Heart left ventricle (tissue), 16 donors: ENCODE measurements at regions of chr18 and their contacts with region 1.

Region 1: DNA sequence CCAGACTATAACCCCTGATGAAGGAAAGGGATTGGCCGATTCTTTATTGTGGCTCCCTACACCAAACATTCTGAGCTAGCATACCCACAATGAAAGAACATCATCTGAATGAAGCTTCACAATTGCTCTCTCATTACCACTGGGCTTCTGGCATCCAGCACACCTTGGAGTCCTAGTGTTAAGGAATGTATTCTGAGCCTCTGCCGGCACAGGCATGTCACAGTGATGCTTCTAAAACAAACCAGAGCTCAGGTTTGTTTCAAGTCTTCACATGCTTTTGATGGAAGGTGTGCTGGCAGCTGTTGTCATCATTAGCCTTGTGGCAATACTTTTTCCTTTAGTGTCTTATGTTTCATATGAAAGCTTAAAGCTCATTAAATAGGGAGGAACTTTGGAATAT is 76.3 kb upstream of the RBBP8 start:
- DNase-seq: no peak
- ATAC-seq: no peak
- H3K4me3 ChIP-seq: no peak overlapping the region
- H3K27ac ChIP-seq: no peak overlapping the region
- H3K4me1 ChIP-seq: no peaks in the 10 kb centered on the region
- H3K27me3 ChIP-seq: peaks cover 0 to 30% (median 2%) of the 10 kb centered on the region in 9 donors
- CTCF ChIP-seq: no peak
- POLR2A ChIP-seq: no peak

Region 2: GRCh38 chr18:22831441-22831904 is 25.4 kb before region 1 on chr18:
- intact Hi-C with region 1: no loop called
- DNase-seq: no peak
- ATAC-seq: no peak
- H3K4me3 ChIP-seq: no peak overlapping the region
- H3K27ac ChIP-seq: no peak overlapping the region
- H3K4me1 ChIP-seq: no peaks in the 10 kb centered on the region
- H3K27me3 ChIP-seq: peaks cover 0 to 4% (median 0%) of the 10 kb centered on the region in 9 donors
- CTCF ChIP-seq: no peak
- POLR2A ChIP-seq: no peak

Region 3: DNA sequence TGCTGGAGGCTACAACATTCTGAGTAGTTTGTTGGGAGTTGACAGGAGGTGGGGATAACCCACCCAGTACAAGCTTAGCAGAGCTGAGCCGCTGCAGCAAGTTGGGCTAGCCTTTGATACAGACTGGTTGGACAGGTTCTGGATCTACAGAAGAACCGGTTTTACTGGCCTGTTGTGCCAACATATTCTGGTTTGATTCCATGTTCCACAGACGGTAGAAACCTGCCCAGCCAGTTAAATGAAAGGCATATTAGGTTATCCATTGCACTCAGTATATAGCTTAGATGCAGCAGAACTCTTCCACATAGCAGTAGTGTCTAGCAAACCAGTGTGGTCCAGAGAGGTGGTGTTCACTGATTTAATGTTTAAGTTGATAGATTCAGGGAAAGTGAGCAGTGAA is 57.0 kb after region 1 on chr18:
- intact Hi-C with region 1: loop called in 1 of 10 experiments (anchors 10 kb)
- DNase-seq: no peak
- ATAC-seq: peak in 1 of 4 donors; percentile 27
- H3K4me3 ChIP-seq: no peak overlapping the region
- H3K27ac ChIP-seq: no peak overlapping the region
- H3K4me1 ChIP-seq: no peaks in the 10 kb centered on the region
- H3K27me3 ChIP-seq: no peaks in the 10 kb centered on the region
- CTCF ChIP-seq: no peak
- POLR2A ChIP-seq: no peak

Region 4: DNA sequence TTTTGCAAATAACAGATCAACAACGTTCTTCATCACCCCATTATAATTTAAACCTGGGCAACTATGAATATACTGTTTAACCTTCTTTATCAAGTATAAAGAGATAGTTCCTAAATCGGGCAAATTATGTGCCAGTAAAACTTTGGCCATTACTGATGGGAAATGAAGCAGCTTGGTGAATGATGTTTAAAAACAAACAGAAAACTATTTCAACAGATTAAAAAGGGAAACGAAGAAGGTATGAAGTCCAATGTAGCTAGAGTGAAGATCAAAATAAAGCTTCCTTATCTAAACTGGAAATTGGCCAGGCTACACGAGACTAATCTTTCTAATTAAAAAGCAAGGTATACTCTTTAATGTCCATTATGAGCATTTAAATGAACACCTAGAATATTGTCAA is 69.6 kb after region 1 on chr18:
- intact Hi-C with region 1: no loop called
- DNase-seq: no peak
- ATAC-seq: no peak
- H3K4me3 ChIP-seq: no peak overlapping the region
- H3K27ac ChIP-seq: no peak overlapping the region
- H3K4me1 ChIP-seq: no peaks in the 10 kb centered on the region
- H3K27me3 ChIP-seq: no peaks in the 10 kb centered on the region
- CTCF ChIP-seq: no peak
- POLR2A ChIP-seq: no peak

Region 5: DNA sequence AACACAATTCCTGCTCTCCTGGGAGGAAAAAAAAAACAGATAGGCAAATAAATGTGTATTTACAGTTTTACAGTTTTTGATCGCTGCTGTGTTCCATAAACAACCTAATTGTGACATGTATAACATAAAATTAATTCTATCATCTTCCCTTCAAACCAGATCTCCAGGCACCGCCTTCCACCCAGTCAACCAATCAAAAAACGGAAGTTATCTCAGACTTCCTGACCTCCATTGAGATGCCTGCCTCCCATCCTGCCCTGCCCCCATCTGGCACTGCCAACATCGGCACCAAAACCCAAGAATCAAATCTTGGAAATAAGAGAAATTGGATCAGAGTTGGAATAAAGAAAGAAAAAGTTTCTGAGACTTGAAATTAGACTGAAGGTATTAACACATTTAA is 593.2 kb after region 1 on chr18:
- intact Hi-C with region 1: no loop called
- DNase-seq: no peak
- ATAC-seq: no peak
- H3K4me3 ChIP-seq: no peak overlapping the region
- H3K27ac ChIP-seq: no peak overlapping the region
- H3K4me1 ChIP-seq: peaks cover 0 to 25% (median 17%) of the 10 kb centered on the region in 12 donors
- H3K27me3 ChIP-seq: no peaks in the 10 kb centered on the region
- CTCF ChIP-seq: no peak
- POLR2A ChIP-seq: no peak